RWPE1 (cell line): ENCODE measurements at regions of chr1 and their contacts with region 1.

Region 1: GRCh38 chr1:25232027-25232865 is at the start of gene SYF2:
- DNase-seq: peak; percentile 90
- H3K27ac ChIP-seq: peak within 1 kb of the TSS; percentile 89
- CTCF ChIP-seq: no peak

Region 2: GRCh38 chr1:25247024-25247828 is 15.0 kb after region 1 on chr1 and contains the start of gene RSRP1:
- CTCF ChIA-PET with region 1: interaction called, 3 read pairs
- POLR2A ChIA-PET with region 1: interaction called, 11 read pairs
- DNase-seq: peak; percentile 99
- H3K27ac ChIP-seq: peak within 1 kb of the TSS; percentile 97
- CTCF ChIP-seq: no peak